Activated CD4-positive, alpha-beta memory T cell treated with anti-CD3 and anti-CD28 coated beads for 36 hours (primary cell): ENCODE measurements at regions of chr3 and their contacts with region 1.

Region 1: GRCh38 chr3:98522244-98523090 is at the start of gene CLDND1:
- DNase-seq: peak; percentile 98
- H3K4me3 Mint-ChIP-seq: peak within 1 kb of the TSS; percentile 91
- H3K27ac Mint-ChIP-seq: peak within 1 kb of the TSS; percentile 86
- H3K4me1 Mint-ChIP-seq: peaks cover 66% of the 10 kb centered on the region
- H3K27me3 Mint-ChIP-seq: no peaks in the 10 kb centered on the region
- total RNA-seq, gene CLDND1: 199 to 208 TPM

Region 2: DNA sequence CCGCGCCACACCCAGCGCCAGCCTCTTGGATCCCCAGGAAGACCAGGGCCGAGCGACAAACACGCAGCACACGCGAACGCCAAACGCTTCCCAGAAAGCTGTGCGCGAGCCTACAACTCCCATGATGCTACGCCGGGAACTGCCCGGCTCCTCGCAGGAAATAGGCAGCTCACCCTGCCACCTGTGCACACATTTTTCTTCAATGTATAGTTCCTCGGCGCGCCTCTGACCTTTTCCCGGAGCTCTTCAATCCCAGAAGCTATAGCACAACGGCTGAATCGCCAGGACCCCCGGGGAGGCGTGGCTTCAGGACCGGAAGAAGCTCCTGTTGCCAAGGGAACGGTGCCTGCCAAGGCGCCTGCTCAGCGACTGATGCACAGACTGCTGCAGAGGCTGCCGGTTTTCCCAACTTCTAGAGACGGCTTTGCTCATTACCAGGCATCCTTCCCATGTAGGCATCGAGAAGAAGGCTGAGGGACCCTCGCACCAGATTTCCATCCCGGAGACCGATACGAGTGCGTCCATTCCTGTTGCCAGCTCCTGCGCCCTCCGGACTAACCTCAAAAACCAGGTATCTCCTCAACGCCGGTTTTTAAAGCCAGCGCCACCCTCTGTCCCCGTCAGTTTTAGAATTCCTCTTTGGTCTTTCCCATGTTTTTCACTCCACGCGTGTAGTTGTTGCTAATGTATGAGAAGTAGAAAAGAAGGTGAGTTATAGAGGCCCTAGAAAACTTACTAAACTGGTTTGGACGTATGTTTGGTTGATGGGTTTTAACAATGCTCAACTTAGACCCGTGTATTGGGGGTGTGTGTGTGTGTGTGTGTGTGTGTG is 757.8 kb before region 1 on chr3 and contains the start of gene ARL6:
- CTCF ChIA-PET with region 1: no interaction called
- POLR2A ChIA-PET with region 1: no interaction called
- intact Hi-C with region 1: loop called (anchors 2 kb)
- DNase-seq: peak; percentile 81
- H3K4me3 Mint-ChIP-seq: peak within 1 kb of the TSS; percentile 98
- H3K27ac Mint-ChIP-seq: peak within 1 kb of the TSS; percentile 94
- H3K4me1 Mint-ChIP-seq: peaks cover 21% of the 10 kb centered on the region
- H3K27me3 Mint-ChIP-seq: no peaks in the 10 kb centered on the region
- total RNA-seq, gene ARL6: 3.9 to 6.1 TPM

Region 3: DNA sequence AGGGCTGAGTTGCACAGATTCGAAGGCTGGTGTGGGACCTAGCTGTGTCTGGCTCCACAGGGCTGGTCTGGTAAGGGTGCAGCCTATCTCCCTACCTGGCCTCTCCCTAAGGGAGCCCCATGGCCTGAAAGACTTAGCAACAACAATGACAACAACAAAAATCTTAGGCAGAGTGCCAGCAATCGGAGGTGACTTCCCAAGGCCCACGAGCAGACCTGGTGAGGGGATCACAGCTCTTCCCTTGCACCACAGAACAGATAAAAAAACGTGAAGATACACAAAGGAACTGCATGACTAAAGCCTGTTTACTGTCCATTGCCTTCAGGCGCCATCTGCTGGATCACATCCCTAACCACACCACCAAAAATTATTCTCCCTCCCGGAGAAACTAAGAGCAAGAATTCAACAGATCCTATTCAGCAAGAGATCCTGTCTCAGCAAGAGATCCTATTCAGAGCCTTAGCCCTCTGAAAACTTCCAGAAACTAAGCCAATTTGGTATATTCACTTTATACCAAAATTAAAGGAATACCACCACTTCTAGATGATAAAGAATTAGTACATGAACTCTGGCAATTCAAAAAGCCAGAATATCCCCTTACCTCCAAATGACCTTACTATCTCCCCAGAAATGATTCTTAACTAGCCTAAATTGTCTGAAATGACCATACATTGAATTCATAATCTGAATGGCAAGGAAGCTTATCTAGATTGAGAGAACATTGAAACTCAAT is 192.9 kb before region 1 on chr3:
- CTCF ChIA-PET with region 1: no interaction called
- POLR2A ChIA-PET with region 1: no interaction called
- intact Hi-C with region 1: loop called (anchors 5 kb)
- DNase-seq: peak; percentile 53
- H3K4me3 Mint-ChIP-seq: no peak overlapping the region
- H3K27ac Mint-ChIP-seq: no peak overlapping the region
- H3K4me1 Mint-ChIP-seq: peaks cover 9% of the 10 kb centered on the region
- H3K27me3 Mint-ChIP-seq: peaks cover 3% of the 10 kb centered on the region

Region 4: GRCh38 chr3:98563661-98564281 is 41.3 kb after region 1 on chr3:
- CTCF ChIA-PET with region 1: interaction called, 4 read pairs
- POLR2A ChIA-PET with region 1: interaction called, 38 read pairs
- intact Hi-C with region 1: loop called (anchors 1 kb)
- DNase-seq: no peak
- H3K4me3 Mint-ChIP-seq: no peak overlapping the region
- H3K27ac Mint-ChIP-seq: peak overlapping the region; percentile 67
- H3K4me1 Mint-ChIP-seq: peaks cover 77% of the 10 kb centered on the region
- H3K27me3 Mint-ChIP-seq: peaks cover 3% of the 10 kb centered on the region

Region 5: GRCh38 chr3:98730338-98730737 is 207.9 kb after region 1 on chr3:
- CTCF ChIA-PET with region 1: no interaction called
- POLR2A ChIA-PET with region 1: no interaction called
- intact Hi-C with region 1: no loop called
- DNase-seq: no peak
- H3K4me3 Mint-ChIP-seq: no peak overlapping the region
- H3K27ac Mint-ChIP-seq: no peak overlapping the region
- H3K4me1 Mint-ChIP-seq: peaks cover 15% of the 10 kb centered on the region
- H3K27me3 Mint-ChIP-seq: peaks cover 52% of the 10 kb centered on the region

Region 6: DNA sequence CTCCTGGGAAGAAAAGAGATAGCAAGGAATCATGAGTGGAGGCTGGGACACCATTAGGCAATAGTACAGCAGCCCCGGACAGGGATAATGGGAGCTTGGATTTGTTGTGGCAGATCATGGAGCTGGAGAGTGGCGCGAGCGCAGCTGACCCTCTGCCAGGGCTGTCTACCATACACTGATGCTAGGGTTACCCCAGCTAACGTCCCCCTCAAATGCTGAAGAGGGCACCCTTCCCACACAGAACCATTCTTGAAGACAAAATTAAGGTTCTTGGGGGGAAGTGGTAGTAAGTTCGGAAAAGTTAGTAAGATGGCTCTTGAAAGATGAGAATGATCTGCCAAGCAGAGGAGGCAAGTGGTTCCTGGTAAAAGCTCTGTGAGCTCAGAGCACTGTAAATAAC is 301.8 kb after region 1 on chr3:
- CTCF ChIA-PET with region 1: no interaction called
- POLR2A ChIA-PET with region 1: no interaction called
- intact Hi-C with region 1: no loop called
- DNase-seq: no peak
- H3K4me3 Mint-ChIP-seq: no peak overlapping the region
- H3K27ac Mint-ChIP-seq: no peak overlapping the region
- H3K4me1 Mint-ChIP-seq: no peaks in the 10 kb centered on the region
- H3K27me3 Mint-ChIP-seq: no peaks in the 10 kb centered on the region

Region 7: DNA sequence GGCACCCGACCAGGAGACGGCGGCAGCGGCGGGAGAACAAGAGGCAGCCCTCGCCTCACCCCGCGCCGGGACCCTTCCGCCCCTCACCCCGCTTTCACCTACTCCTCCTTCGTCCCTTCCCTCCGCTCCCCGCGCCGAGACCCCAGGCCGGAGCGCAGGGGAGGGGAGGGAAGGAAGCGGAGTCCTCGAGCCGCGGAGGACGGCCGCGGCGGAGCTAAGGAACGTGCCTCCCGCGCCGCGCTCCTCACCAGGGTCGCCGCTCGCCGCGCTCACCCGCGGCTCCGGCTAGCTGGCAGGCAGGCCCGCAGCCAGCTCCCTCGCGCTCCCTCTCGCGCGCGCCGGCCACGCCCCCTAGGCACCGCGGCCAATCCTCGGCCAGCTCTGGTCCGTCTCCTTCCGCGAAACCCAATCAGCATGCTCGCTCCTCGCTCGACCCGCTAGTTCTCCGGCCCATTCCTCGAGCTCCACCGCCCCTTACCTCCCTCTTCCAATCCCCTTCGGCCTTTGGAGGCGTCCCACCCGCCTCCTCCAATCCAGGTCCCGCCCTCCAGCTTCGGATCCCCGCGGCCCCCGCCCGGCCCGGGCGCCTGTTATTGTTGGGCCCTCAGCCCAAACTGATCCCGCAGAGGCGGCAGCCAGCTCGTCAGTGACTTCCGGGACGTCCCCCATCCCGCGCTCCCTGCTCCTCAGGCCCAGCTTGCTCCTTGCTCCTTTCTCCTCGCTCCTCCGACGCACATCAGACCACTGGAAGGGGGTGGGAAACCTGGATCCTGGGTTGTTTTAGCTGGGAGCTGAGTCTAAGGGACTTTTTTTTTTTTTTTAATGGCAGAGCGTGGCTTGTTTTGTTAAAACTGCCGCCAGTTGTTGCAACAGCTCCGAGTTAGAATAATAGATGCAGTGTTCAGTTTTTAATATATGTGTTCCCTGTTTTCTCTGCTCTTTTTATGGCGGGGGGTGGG is 379.2 kb after region 1 on chr3 and contains the start of gene DCBLD2:
- CTCF ChIA-PET with region 1: no interaction called
- POLR2A ChIA-PET with region 1: no interaction called
- intact Hi-C with region 1: loop called (anchors 5 kb)
- DNase-seq: peak; percentile 95
- H3K4me3 Mint-ChIP-seq: peak within 1 kb of the TSS; percentile 78
- H3K27ac Mint-ChIP-seq: no peak within 1 kb of the TSS
- H3K4me1 Mint-ChIP-seq: peaks cover 11% of the 10 kb centered on the region
- H3K27me3 Mint-ChIP-seq: peaks cover 5% of the 10 kb centered on the region
- total RNA-seq, gene DCBLD2: 1.2 to 1.6 TPM

Region 8: DNA sequence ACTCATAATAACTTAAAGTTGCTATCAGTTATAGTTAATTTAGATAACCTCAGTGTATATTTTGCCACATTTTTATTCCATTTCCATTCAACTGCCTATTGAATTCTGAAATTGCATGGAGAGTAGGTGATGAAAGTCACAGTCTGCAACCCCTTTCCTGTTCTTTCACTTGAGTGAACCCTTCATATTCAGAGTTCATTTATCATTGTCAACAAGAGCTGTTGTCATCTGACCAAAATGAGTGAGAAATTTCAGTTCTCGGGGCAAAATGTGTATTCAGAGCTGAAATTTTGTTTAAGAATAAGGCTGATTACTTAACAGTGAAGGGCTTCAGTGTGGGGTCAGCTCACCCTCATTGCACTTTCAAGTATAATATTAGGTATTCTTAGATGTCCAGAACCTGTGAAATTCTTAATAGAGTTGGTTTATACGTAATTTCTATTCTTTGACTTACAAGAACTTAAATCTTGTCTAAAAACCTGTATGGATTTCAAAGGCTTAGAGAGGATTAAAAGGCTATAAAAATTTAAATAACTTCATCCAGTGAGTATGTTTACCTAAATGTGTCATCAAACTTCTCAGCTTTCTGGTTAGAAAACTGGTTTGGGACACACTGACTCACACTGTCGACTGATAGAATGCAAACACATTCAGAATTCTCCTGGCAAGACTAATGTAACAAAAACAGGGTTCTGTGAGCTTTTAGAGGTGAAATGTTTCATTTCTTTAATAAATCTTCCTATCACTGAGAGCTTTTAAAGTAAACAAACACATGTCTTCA is 1387.4 kb after region 1 on chr3:
- CTCF ChIA-PET with region 1: no interaction called
- POLR2A ChIA-PET with region 1: no interaction called
- intact Hi-C with region 1: no loop called
- DNase-seq: no peak
- H3K4me3 Mint-ChIP-seq: no peak overlapping the region
- H3K27ac Mint-ChIP-seq: no peak overlapping the region
- H3K4me1 Mint-ChIP-seq: no peaks in the 10 kb centered on the region
- H3K27me3 Mint-ChIP-seq: no peaks in the 10 kb centered on the region